MCF 10A (cell line): ENCODE measurements at regions of chr4 and their contacts with region 1.

Region 1: GRCh38 chr4:94406668-94407437 is 44.9 kb upstream of the PDLIM5 start:
- DNase-seq: peak; percentile 86
- H3K4me3 Mint-ChIP-seq: no peak overlapping the region
- H3K27ac Mint-ChIP-seq: no peak overlapping the region
- H3K4me1 Mint-ChIP-seq: peaks cover 7% of the 10 kb centered on the region
- H3K27me3 Mint-ChIP-seq: no peaks in the 10 kb centered on the region
- CTCF ChIP-seq: peak; percentile 82

Region 2: DNA sequence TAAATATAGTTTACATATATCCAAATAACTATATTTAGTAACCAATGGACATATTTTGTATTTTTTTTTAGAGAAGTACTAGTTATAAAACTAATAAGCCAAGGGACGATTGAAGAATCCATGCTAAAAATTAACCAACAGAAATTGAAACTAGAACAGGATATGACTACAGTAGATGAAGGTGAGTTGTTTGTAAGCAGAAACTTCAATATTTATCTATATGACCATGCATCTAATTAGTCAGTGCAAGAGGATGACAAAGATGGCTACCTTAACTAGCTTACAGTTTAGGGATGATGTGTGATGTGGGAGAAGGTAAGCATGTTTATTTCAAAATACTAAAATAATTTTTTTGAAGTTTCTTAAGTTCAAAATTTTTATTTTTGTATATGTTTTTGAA is 122.0 kb before region 1 on chr4:
- CTCF ChIA-PET with region 1: no interaction called
- POLR2A ChIA-PET with region 1: no interaction called
- intact Hi-C with region 1: no loop called
- DNase-seq: no peak
- H3K4me3 Mint-ChIP-seq: no peak overlapping the region
- H3K27ac Mint-ChIP-seq: no peak overlapping the region
- H3K4me1 Mint-ChIP-seq: no peaks in the 10 kb centered on the region
- H3K27me3 Mint-ChIP-seq: no peaks in the 10 kb centered on the region
- CTCF ChIP-seq: no peak

Region 3: GRCh38 chr4:94390804-94391410 is 15.9 kb before region 1 on chr4:
- CTCF ChIA-PET with region 1: interaction called, 15 read pairs
- POLR2A ChIA-PET with region 1: no interaction called
- intact Hi-C with region 1: no loop called
- DNase-seq: peak; percentile 41
- H3K4me3 Mint-ChIP-seq: no peak overlapping the region
- H3K27ac Mint-ChIP-seq: no peak overlapping the region
- H3K4me1 Mint-ChIP-seq: peaks cover 5% of the 10 kb centered on the region
- H3K27me3 Mint-ChIP-seq: peaks cover 22% of the 10 kb centered on the region
- CTCF ChIP-seq: peak; percentile 49

Region 4: DNA sequence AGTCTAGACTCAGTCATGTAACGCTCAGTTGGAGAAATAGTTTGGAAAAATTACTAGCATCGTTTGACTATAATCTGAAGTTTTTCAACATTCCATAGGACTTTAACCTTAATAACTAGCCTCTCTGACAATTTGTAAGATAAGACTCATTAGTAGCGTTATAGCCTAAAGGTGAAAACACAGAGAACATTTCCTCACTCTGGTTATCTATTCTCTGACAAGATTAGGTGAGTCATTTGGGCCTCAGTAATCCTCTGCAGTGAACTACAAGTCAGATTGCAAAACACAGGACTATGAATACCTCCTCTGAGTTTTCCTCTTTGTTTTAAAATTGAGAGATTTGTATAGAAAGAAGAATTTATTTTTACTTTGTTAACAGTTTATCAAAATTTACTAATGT is 13.1 kb after region 1 on chr4:
- CTCF ChIA-PET with region 1: interaction called, 10 read pairs
- POLR2A ChIA-PET with region 1: interaction called, 5 read pairs
- intact Hi-C with region 1: no loop called
- DNase-seq: peak; percentile 85
- H3K4me3 Mint-ChIP-seq: peak overlapping the region; percentile 12
- H3K27ac Mint-ChIP-seq: no peak overlapping the region
- H3K4me1 Mint-ChIP-seq: peaks cover 13% of the 10 kb centered on the region
- H3K27me3 Mint-ChIP-seq: no peaks in the 10 kb centered on the region
- CTCF ChIP-seq: no peak

Region 5: GRCh38 chr4:94457692-94458106 is 50.8 kb after region 1 on chr4:
- CTCF ChIA-PET with region 1: interaction called, 41 read pairs
- POLR2A ChIA-PET with region 1: interaction called, 288 read pairs
- intact Hi-C with region 1: loop called (anchors 1 kb)
- DNase-seq: peak; percentile 52
- H3K4me3 Mint-ChIP-seq: peak overlapping the region; percentile 42
- H3K27ac Mint-ChIP-seq: peak overlapping the region; percentile 37
- H3K4me1 Mint-ChIP-seq: peaks cover 52% of the 10 kb centered on the region
- H3K27me3 Mint-ChIP-seq: no peaks in the 10 kb centered on the region
- CTCF ChIP-seq: no peak

Region 6: GRCh38 chr4:94548571-94548970 is 141.7 kb after region 1 on chr4:
- CTCF ChIA-PET with region 1: interaction called, 21 read pairs
- POLR2A ChIA-PET with region 1: interaction called, 5 read pairs
- intact Hi-C with region 1: no loop called
- DNase-seq: peak; percentile 76
- H3K4me3 Mint-ChIP-seq: peak overlapping the region; percentile 37
- H3K27ac Mint-ChIP-seq: peak overlapping the region; percentile 91
- H3K4me1 Mint-ChIP-seq: peaks cover 32% of the 10 kb centered on the region
- H3K27me3 Mint-ChIP-seq: no peaks in the 10 kb centered on the region
- CTCF ChIP-seq: no peak

Region 7: GRCh38 chr4:94577136-94577535 is 170.3 kb after region 1 on chr4:
- CTCF ChIA-PET with region 1: interaction called, 13 read pairs
- POLR2A ChIA-PET with region 1: interaction called, 4 read pairs
- intact Hi-C with region 1: no loop called
- DNase-seq: peak; percentile 28
- H3K4me3 Mint-ChIP-seq: no peak overlapping the region
- H3K27ac Mint-ChIP-seq: no peak overlapping the region
- H3K4me1 Mint-ChIP-seq: no peaks in the 10 kb centered on the region
- H3K27me3 Mint-ChIP-seq: no peaks in the 10 kb centered on the region
- CTCF ChIP-seq: no peak

Region 8: DNA sequence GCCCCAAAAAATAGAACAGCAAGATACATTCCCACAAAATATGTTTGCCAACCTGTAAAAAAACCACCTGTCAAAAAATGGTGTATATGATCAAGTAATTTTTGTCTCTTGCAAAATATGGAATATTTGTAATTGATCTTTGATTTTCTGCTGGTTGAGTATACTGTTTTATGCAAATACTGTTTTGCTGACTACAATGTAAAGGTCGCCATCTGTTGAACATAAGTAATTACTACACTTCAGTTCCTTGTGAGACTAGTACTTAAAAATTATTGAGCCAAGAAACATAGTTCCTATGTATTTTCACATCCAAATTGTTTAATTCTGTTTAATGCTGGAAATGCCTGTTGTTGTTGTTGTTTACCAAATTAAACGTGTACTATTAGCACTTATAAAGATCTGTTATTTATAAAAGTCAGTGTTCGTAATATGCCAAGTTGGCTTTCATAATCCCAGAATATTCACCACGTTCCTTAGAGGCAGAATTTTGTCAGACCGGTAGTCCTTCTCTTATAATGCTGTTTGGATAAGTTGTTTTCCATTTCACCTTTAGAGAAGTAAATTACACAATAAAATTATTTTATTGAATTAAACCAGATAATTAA is 189.1 kb after region 1 on chr4:
- CTCF ChIA-PET with region 1: interaction called, 27 read pairs
- POLR2A ChIA-PET with region 1: interaction called, 6 read pairs
- intact Hi-C with region 1: loop called (anchors 1 kb)
- DNase-seq: peak; percentile 63
- H3K4me3 Mint-ChIP-seq: no peak overlapping the region
- H3K27ac Mint-ChIP-seq: no peak overlapping the region
- H3K4me1 Mint-ChIP-seq: peaks cover 5% of the 10 kb centered on the region
- H3K27me3 Mint-ChIP-seq: no peaks in the 10 kb centered on the region
- CTCF ChIP-seq: peak; percentile 66